Endothelial cell of umbilical vein (primary cell): ENCODE measurements at regions of chr11 and their contacts with region 1.

Region 1: GRCh38 chr11:126194121-126194543 is 17.3 kb downstream of the RPUSD4 start:
- DNase-seq: peak; percentile 67
- H3K4me3 ChIP-seq: no peak overlapping the region
- H3K27ac ChIP-seq: no peak overlapping the region
- H3K4me1 ChIP-seq: no peaks in the 10 kb centered on the region
- H3K27me3 ChIP-seq: no peaks in the 10 kb centered on the region
- CTCF ChIP-seq: peak; percentile 35 to 49
- POLR2A ChIP-seq: no peak

Region 2: GRCh38 chr11:125923012-125923579 is 271.0 kb before region 1 on chr11:
- CTCF ChIA-PET with region 1: interaction called, 113 read pairs
- POLR2A ChIA-PET with region 1: no interaction called
- dilution Hi-C with region 1: no loop called
- intact Hi-C with region 1: loop called (anchors 1 kb)
- DNase-seq: peak; percentile 69
- H3K4me3 ChIP-seq: no peak overlapping the region
- H3K27ac ChIP-seq: no peak overlapping the region
- H3K4me1 ChIP-seq: no peaks in the 10 kb centered on the region
- H3K27me3 ChIP-seq: peaks cover 2 to 7% of the 10 kb centered on the region in 2 experiments
- CTCF ChIP-seq: peak; percentile 73 to 74
- POLR2A ChIP-seq: no peak

Region 3: DNA sequence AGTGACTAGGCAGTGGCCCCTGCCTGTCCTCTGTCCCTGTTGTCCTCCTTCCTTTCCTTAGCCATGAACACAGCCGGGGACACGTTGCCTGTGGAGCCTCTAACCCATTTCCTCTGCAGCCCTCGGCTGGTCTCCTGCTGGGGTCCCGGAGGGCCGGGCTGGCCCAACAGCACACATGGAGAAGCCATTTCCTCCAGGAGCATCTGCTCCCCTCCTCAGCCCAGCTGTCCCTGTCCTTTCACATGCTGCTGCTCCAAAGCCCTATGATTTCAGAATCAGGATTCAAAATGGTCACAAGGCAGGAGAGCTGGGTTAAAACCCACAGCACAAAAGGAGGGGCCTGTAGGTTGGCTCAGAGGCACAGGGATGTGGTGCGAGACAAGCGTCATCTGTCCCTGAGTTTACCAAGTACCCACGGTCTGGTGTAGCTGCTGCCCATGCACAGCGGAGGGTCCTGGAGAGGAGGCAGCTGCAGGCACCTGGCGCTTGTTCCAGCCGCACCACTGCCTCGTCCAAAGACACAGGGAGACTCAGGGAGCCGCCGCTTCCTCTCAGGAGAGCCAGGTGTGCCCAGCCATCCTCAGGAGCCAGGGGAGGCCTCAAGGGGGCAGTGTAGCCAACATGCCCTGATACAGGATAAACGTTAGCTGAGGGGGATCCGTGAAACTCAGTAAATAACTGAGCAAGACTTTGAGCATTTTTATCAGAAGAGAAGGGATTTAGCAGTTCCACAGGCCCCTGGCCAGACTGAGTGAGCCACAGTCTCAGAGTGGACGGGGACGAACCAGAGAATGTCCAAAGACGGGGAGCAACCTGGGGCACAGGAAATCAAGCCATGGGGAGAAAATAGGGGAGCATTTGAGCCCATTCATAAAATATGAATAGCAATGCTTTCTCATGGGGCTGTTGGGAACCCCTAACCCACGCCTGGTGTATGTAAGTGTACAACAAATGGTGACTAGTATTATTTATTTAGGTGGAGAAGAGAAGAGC is 252.2 kb before region 1 on chr11:
- CTCF ChIA-PET with region 1: interaction called, 147 read pairs
- POLR2A ChIA-PET with region 1: no interaction called
- dilution Hi-C with region 1: no loop called
- intact Hi-C with region 1: loop called (anchors 1 kb)
- DNase-seq: peak; percentile 21
- H3K4me3 ChIP-seq: no peak overlapping the region
- H3K27ac ChIP-seq: no peak overlapping the region
- H3K4me1 ChIP-seq: no peaks in the 10 kb centered on the region
- H3K27me3 ChIP-seq: no peaks in the 10 kb centered on the region
- CTCF ChIP-seq: peak; percentile 62 to 80
- POLR2A ChIP-seq: no peak

Region 4: DNA sequence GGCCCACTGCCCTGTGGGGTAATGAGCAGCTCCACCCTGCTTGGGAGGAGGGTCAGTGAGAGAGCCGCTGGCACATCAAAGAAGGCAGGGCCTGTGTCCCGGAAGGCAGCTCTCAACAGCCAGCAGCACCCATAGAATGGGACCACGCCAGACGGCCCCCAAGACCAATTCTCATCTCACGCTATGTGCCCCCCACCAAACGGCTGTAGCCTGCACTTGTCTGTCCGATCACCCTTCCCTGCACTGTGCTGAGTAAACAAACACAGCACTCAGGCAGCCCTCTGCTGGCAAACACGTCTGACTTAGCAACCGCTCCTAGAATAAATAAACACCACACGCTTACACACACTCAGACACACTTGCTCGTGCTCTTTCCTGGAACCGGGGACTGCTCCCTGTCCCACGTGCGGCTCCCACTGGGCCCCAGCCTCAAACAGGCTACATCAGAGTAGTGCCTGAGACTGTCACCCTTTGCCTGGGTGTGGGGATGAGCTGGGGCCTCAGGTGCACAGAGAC is 78.3 kb before region 1 on chr11:
- CTCF ChIA-PET with region 1: no interaction called
- POLR2A ChIA-PET with region 1: no interaction called
- dilution Hi-C with region 1: no loop called
- intact Hi-C with region 1: loop called (anchors 2 kb)
- DNase-seq: peak; percentile 94
- H3K4me3 ChIP-seq: no peak overlapping the region
- H3K27ac ChIP-seq: no peak overlapping the region
- H3K4me1 ChIP-seq: no peaks in the 10 kb centered on the region
- H3K27me3 ChIP-seq: no peaks in the 10 kb centered on the region
- CTCF ChIP-seq: peak in 1 of 2 donors; percentile 39
- POLR2A ChIP-seq: no peak

Region 5: DNA sequence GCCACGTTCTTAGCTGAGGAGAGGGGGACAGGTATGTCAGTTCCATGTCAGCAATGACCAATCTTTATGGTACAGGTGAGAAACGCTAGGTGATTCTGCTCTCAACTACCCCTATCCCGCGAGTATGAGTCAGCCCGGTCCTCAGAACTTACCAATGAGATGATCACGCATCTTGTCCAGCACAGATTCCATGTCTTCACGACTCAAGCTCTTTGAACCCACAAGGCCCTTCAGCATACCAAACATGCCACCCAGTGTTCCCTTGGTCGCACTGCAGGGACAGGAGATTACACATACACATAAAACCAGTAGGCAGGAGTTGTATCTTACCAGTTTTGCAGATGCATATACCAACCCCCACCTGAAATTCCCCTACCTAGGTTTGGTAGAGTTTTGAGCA is 71.7 kb after region 1 on chr11:
- CTCF ChIA-PET with region 1: no interaction called
- POLR2A ChIA-PET with region 1: no interaction called
- dilution Hi-C with region 1: no loop called
- intact Hi-C with region 1: no loop called
- DNase-seq: peak; percentile 28
- H3K4me3 ChIP-seq: no peak overlapping the region
- H3K27ac ChIP-seq: no peak overlapping the region
- H3K4me1 ChIP-seq: peaks cover 12% of the 10 kb centered on the region
- H3K27me3 ChIP-seq: no peaks in the 10 kb centered on the region
- CTCF ChIP-seq: no peak
- POLR2A ChIP-seq: no peak

Region 6: GRCh38 chr11:126416542-126417090 is 222.5 kb after region 1 on chr11:
- CTCF ChIA-PET with region 1: no interaction called
- POLR2A ChIA-PET with region 1: no interaction called
- dilution Hi-C with region 1: no loop called
- intact Hi-C with region 1: no loop called
- DNase-seq: peak; percentile 91
- H3K4me3 ChIP-seq: peak overlapping the region; percentile 44 to 47 (median 44)
- H3K27ac ChIP-seq: peak overlapping the region; percentile 57
- H3K4me1 ChIP-seq: peaks cover 11% of the 10 kb centered on the region
- H3K27me3 ChIP-seq: no peaks in the 10 kb centered on the region
- CTCF ChIP-seq: no peak
- POLR2A ChIP-seq: peak; percentile 76